A549 (cell line): ENCODE measurements at regions of chr2 and their contacts with region 1.

Region 1: GRCh38 chr2:85642725-85643124 is 25.3 kb downstream of the SFTPB start:
- DNase-seq: no peak
- ATAC-seq: no peak
- H3K4me3 ChIP-seq: no peak overlapping the region
- H3K27ac ChIP-seq: no peak overlapping the region
- H3K4me1 ChIP-seq: peaks cover 1% of the 10 kb centered on the region; the same call in 1 of the 3 replicates
- CTCF ChIP-seq: no peak
- EP300 ChIP-seq: no peak
- POLR2A ChIP-seq: no peak
- RAD21 ChIP-seq: no peak

Region 2: DNA sequence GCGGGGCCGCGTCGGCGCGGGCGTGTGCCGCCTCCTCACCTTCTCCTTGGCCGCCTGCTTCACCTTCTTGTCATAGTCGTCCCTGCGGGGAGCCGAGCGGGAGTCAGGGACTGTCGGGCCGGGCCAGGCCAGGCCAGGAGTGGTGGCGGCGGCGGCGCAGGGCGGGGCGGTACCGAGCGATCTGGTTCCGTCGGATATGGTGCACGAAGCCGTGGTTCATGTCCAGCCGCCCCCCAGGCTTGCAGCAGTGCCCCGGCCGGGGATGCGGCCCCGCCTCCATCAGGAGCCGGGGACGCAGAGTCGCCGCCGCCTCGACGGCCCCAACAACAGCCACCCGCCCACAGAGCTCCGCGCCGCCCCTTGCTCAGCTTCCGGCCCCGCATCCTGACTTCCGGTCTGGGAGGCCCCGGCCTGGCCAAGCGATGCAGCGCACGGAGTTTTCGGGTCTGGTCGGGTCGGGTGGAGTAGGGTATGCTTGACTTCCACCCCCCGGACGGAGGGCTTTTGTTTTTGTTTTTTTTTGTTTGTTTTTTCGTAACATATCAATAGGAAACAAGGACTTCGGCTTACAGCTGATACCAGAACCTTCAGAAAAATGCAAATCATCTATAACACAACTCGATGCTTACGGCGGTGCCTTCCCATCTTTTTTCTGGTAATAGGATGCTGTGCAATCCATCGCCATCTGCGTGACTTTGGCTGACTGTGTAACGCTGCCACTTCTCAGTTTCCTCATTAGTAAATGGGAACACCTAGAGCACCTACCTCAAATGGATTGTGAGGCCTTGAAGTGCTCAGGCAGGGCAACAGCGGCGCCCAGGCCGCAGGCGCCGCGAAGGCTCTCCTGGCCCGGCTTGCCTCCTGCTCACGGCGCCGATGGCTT is 30.8 kb before region 1 on chr2 and contains the start of gene C2orf68:
- CTCF ChIA-PET with region 1: interaction called, 229 read pairs
- POLR2A ChIA-PET with region 1: interaction called, 10 read pairs
- DNase-seq: peak; percentile 94 to 95
- ATAC-seq: peak; percentile 90 to 91
- H3K4me3 ChIP-seq: peak within 1 kb of the TSS; percentile 61
- H3K27ac ChIP-seq: peak within 1 kb of the TSS; percentile 72 to 92
- H3K4me1 ChIP-seq: peaks cover 14% of the 10 kb centered on the region; the same call in 2 of the 3 replicates
- CTCF ChIP-seq: no peak
- EP300 ChIP-seq: peak in 1 of 2 experiments; percentile 19; a peak in 1 of 5 replicates
- POLR2A ChIP-seq: peak; percentile 79
- RAD21 ChIP-seq: no peak
- polyA plus RNA-seq, gene C2orf68: 48.3 and 57.4 TPM in 2 replicates

Region 3: GRCh38 chr2:85662899-85663593 is 20.3 kb after region 1 on chr2:
- CTCF ChIA-PET with region 1: interaction called, 73 read pairs
- POLR2A ChIA-PET with region 1: interaction called, 4 read pairs
- DNase-seq: peak in 1 of 2 experiments; percentile 67
- ATAC-seq: peak; percentile 72 to 80
- H3K4me3 ChIP-seq: no peak overlapping the region
- H3K27ac ChIP-seq: peak overlapping the region in 1 of 2 experiments; percentile 74; a peak in 3 of 6 replicates
- H3K4me1 ChIP-seq: peaks cover 15% of the 10 kb centered on the region
- CTCF ChIP-seq: no peak
- EP300 ChIP-seq: no peak
- POLR2A ChIP-seq: 0 out of 2 replicates have a peak, but pooled peaks have one; percentile 5
- RAD21 ChIP-seq: no peak

Region 4: GRCh38 chr2:85684806-85685205 is 42.1 kb after region 1 on chr2:
- CTCF ChIA-PET with region 1: interaction called, 37 read pairs
- POLR2A ChIA-PET with region 1: no interaction called
- DNase-seq: no peak
- ATAC-seq: no peak
- H3K4me3 ChIP-seq: no peak overlapping the region
- H3K27ac ChIP-seq: peak overlapping the region in 1 of 2 experiments; percentile 12; a peak in 3 of 6 replicates
- H3K4me1 ChIP-seq: peaks cover 33% of the 10 kb centered on the region
- CTCF ChIP-seq: no peak
- EP300 ChIP-seq: no peak
- POLR2A ChIP-seq: no peak
- RAD21 ChIP-seq: no peak

Region 5: DNA sequence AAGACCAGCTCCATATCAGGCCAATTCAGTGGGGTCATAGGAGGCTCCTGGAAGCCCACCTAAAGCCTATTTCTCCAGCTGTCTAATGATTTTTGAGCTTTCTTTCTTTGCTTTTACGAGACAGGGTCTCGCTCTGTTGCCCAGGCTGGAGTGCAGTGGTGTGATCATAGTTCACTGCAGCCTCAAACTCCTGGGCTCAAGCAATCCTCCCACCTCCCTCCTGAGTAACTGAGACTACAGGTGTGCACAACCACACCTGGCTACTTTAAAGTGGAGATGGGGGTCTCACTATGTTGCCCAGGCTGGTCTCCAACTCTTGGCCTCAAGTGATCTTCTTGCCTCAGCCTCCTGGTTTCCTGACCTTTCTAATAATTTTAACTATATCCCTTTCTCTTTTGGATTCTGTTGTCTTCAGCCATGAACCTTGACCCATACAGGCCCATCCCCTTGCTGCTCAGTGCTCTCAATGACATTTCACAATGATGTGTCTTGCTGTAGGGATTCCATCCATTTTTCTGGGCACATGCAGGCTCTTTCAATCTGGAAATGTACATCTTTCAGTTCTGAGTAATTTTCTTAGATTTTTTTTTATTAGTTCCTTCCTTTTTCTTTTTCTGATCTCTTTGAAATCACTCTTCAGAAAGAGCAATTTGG is 81.1 kb after region 1 on chr2:
- CTCF ChIA-PET with region 1: interaction called, 38 read pairs
- POLR2A ChIA-PET with region 1: interaction called, 3 read pairs
- DNase-seq: no peak
- ATAC-seq: no peak
- H3K4me3 ChIP-seq: no peak overlapping the region
- H3K27ac ChIP-seq: no peak overlapping the region; a peak in 1 of 6 replicates
- H3K4me1 ChIP-seq: peaks cover 12% of the 10 kb centered on the region
- CTCF ChIP-seq: no peak
- EP300 ChIP-seq: no peak
- POLR2A ChIP-seq: no peak
- RAD21 ChIP-seq: no peak